ENCODE measurements at regions of chr19 and their contacts with region 1.

Region 1: GRCh38 chr19:34171877-34172660 is at the start of gene LSM14A:
- DNase-seq: peak; percentile 95
- ATAC-seq: peak; percentile 70
- H3K4me3 Mint-ChIP-seq: peak within 1 kb of the TSS; percentile 88
- H3K27ac Mint-ChIP-seq: peak within 1 kb of the TSS; percentile 99
- H3K4me1 Mint-ChIP-seq: peaks cover 36% of the 10 kb centered on the region
- H3K27me3 Mint-ChIP-seq: no peaks in the 10 kb centered on the region
- total RNA-seq, gene LSM14A: 89.0 to 151 TPM

Region 2: GRCh38 chr19:32691291-32691951 is 1480.6 kb before region 1 on chr19 and contains the start of gene NUDT19:
- CTCF ChIA-PET with region 1: no interaction called
- POLR2A ChIA-PET with region 1: no interaction called
- intact Hi-C with region 1: loop called in 1 of 2 experiments (anchors 5 kb)
- DNase-seq: peak; percentile 91
- ATAC-seq: peak; percentile 83
- H3K4me3 Mint-ChIP-seq: peak within 1 kb of the TSS; percentile 83
- H3K27ac Mint-ChIP-seq: peak within 1 kb of the TSS; percentile 92
- H3K4me1 Mint-ChIP-seq: peaks cover 56% of the 10 kb centered on the region
- H3K27me3 Mint-ChIP-seq: no peaks in the 10 kb centered on the region
- total RNA-seq, gene NUDT19: 14.7 to 17.7 TPM

Region 3: GRCh38 chr19:34134190-34135053 is 37.6 kb before region 1 on chr19:
- CTCF ChIA-PET with region 1: interaction called, 3 read pairs
- POLR2A ChIA-PET with region 1: interaction called, 4 read pairs
- intact Hi-C with region 1: loop called (anchors 1 to 5 kb)
- DNase-seq: peak; percentile 94
- ATAC-seq: peak; percentile 94
- H3K4me3 Mint-ChIP-seq: peak overlapping the region; percentile 92
- H3K27ac Mint-ChIP-seq: peak overlapping the region; percentile 95
- H3K4me1 Mint-ChIP-seq: peaks cover 9% of the 10 kb centered on the region
- H3K27me3 Mint-ChIP-seq: no peaks in the 10 kb centered on the region

Region 4: DNA sequence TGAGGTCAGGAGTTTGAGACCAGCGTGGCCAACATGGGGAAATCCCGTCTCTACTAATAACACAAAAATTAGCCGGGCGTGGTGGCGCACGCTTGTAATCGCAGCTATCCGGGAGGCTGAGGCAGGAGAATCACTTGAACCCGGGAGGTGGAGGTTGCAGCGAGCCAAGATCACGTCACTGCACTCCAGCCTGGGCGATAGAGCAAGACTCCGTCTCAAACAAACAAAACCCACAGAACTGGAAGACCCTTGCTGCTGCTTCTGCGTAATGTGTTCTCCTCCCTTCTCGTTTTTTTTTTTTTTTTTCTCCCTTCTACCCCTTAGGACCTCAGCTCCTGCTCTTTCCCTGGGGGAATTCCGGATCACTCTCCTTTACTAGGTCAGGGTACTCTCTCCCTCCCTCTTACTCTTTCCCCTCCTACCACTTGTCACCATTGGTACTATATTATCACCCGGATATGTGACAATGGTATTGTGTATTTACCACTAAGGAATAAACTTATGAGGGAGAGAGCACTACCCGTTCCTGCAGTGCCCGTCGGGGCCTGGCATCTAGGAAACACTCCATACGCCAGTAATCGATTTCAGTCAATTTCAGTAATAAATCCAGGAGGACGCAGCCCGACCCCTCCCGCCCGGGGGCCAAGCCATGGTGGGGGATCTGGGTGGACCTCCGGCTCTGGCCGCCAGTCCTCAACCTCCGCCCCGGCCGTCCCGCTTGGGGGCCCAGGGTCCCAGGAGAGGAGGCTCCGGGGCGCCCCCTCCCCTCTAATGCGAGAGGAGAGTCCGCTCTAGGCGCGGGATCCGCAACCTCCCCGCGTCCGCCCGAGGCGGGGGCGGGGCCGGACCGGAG is 81.9 kb after region 1 on chr19:
- CTCF ChIA-PET with region 1: no interaction called
- POLR2A ChIA-PET with region 1: no interaction called
- intact Hi-C with region 1: loop called in 1 of 2 experiments (anchors 1 kb)
- DNase-seq: no peak
- ATAC-seq: peak; percentile 24
- H3K4me3 Mint-ChIP-seq: peak overlapping the region; percentile 81
- H3K27ac Mint-ChIP-seq: peak overlapping the region; percentile 98
- H3K4me1 Mint-ChIP-seq: peaks cover 30% of the 10 kb centered on the region
- H3K27me3 Mint-ChIP-seq: no peaks in the 10 kb centered on the region

Region 5: DNA sequence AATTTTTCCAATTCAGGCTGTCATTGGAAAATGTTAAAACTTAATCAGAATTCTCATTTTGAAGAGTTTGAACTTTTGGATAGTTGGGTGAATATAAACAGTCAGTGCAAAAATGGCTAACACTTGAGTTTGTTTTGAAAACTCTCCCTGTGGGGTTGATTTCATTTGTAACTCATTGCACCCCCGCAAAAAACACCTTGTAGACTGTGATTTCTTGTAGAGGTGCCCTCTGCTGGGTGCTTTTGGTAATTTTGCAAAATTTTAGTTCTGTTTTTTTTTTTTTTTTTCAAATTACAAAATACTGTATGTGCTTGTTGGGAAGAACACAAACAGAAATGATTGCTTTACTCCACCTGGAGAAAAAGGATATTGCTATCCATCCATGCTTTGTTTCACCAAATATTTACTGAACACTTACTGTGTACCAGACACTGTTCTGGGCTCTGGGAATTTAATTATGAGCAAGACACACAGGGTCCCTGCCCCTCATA is 164.8 kb after region 1 on chr19:
- CTCF ChIA-PET with region 1: no interaction called
- POLR2A ChIA-PET with region 1: no interaction called
- intact Hi-C with region 1: loop called in 1 of 2 experiments (anchors 5 kb)
- DNase-seq: peak; percentile 70
- ATAC-seq: peak; percentile 75
- H3K4me3 Mint-ChIP-seq: no peak overlapping the region
- H3K27ac Mint-ChIP-seq: peak overlapping the region; percentile 63
- H3K4me1 Mint-ChIP-seq: peaks cover 13% of the 10 kb centered on the region
- H3K27me3 Mint-ChIP-seq: no peaks in the 10 kb centered on the region

Region 6: GRCh38 chr19:34359140-34359953 is 187.3 kb after region 1 on chr19:
- CTCF ChIA-PET with region 1: no interaction called
- POLR2A ChIA-PET with region 1: interaction called, 4 read pairs
- intact Hi-C with region 1: loop called in 1 of 2 experiments (anchors 1 kb)
- DNase-seq: peak; percentile 100
- ATAC-seq: peak; percentile 93
- H3K4me3 Mint-ChIP-seq: peak overlapping the region; percentile 77
- H3K27ac Mint-ChIP-seq: peak overlapping the region; percentile 89
- H3K4me1 Mint-ChIP-seq: peaks cover 43% of the 10 kb centered on the region
- H3K27me3 Mint-ChIP-seq: no peaks in the 10 kb centered on the region